OCI-LY7 (cell line): ENCODE measurements at regions of chr17 and their contacts with region 1.

Region 1: GRCh38 chr17:57243171-57243948 is 13.0 kb upstream of the MSI2 start:
- DNase-seq: peak; percentile 85
- H3K4me3 ChIP-seq: no peak overlapping the region
- H3K27ac ChIP-seq: no peak overlapping the region
- H3K4me1 ChIP-seq: peaks cover 19% of the 10 kb centered on the region
- CTCF ChIP-seq: peak; percentile 100

Region 2: DNA sequence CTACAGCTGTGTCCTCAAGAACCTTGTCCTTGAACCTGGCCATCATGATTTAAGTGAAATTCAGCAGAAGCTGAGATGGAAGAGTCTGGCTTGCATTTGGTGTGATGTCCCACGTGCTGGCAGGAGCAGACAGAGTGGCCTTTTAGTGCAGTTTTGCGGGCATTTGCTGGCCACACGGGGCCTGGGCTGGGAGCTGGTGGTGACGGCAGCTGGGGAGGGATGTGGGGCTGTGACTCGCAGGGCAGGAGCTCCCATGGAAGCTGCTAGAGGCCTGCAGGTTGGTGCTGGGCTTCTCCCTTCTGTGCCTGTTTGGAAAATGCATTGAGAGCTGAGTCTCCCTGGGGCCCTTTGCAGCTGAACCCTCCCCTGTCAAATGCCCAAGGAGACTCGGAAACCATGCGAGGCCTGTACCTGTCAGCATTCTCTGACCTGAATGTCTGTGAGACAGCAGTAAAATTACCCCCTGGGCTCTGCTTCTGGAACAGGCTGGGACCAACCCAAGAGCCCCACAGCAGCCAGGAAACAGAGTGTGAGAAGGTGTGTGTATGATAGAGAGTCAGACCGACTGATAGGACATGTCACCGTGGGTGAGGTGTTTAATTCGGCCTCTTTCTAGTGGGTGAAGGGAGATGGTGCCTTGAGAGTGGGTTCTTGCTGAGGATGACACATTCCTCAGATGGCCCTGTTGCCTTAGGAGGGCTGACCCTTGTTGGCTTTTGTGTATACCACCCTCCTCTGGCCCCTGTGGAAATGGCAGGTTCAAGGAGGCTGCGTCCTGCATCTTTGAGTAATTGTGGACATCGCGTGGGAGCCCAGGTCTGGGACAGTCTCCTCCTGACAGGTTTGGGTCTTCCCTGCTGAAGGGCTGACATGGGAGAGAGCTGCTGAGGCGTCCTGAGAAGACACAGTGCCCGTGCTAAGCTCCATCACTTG is 158.5 kb after region 1 on chr17:
- CTCF ChIA-PET with region 1: interaction called, 3 read pairs
- POLR2A ChIA-PET with region 1: no interaction called
- intact Hi-C with region 1: loop called (anchors 1 kb)
- DNase-seq: peak; percentile 51
- H3K4me3 ChIP-seq: no peak overlapping the region
- H3K27ac ChIP-seq: no peak overlapping the region
- H3K4me1 ChIP-seq: peaks cover 53% of the 10 kb centered on the region
- CTCF ChIP-seq: peak; percentile 71

Region 3: DNA sequence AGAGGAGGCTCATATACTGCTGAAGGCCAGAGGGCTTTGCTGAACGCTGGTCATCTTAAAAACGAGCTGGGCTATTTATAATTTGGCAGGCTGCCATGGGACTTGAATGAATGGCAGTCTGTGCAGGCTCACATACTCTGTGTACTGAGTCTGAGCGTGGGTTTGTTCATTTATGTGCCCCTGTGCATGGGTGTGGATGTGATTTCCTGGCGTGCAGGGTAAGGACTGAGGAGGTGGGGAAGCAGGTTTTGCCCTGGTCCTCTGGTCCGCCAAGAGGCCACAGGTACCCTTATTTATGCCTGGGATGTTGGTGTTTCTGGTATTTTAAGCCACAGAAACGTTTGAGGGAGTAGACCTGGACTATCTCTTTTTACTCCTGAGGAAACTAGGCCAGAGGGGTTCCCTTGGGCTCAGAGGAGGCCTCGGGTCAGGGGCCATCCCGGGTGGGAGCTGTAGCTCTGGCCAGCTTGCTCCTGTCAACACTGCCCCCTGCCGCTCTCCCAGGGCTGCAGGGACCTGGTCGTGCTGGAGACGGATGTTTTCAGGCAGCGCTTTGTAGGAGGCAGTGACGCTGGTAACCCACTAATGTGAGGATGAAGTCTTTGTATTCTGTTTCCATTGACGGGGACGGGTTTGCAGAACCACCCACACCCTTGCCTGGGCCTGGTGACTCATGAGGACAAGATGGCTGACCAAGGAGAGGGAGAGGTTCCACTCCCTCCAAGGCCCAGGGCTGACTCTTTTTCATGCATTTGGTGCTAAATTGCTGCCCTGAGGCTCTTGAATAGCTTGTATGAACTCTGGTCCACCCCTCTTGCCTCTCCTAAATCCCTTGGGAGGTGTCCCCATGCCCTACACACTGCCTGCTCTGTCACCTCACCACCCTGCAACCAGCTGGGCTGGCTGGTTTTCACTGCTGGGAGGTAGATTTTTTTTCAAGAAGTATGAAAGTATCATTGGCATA is 197.4 kb after region 1 on chr17:
- CTCF ChIA-PET with region 1: interaction called, 15 read pairs
- POLR2A ChIA-PET with region 1: interaction called, 3 read pairs
- intact Hi-C with region 1: loop called (anchors 1 kb)
- DNase-seq: peak; percentile 66
- H3K4me3 ChIP-seq: no peak overlapping the region
- H3K27ac ChIP-seq: peak overlapping the region; percentile 82
- H3K4me1 ChIP-seq: peaks cover 62% of the 10 kb centered on the region
- CTCF ChIP-seq: peak; percentile 78

Region 4: GRCh38 chr17:57518587-57519581 is 275.5 kb after region 1 on chr17:
- CTCF ChIA-PET with region 1: no interaction called
- POLR2A ChIA-PET with region 1: no interaction called
- intact Hi-C with region 1: loop called (anchors 5 kb)
- DNase-seq: no peak
- H3K4me3 ChIP-seq: no peak overlapping the region
- H3K27ac ChIP-seq: no peak overlapping the region
- H3K4me1 ChIP-seq: peaks cover 40% of the 10 kb centered on the region
- CTCF ChIP-seq: no peak

Region 5: DNA sequence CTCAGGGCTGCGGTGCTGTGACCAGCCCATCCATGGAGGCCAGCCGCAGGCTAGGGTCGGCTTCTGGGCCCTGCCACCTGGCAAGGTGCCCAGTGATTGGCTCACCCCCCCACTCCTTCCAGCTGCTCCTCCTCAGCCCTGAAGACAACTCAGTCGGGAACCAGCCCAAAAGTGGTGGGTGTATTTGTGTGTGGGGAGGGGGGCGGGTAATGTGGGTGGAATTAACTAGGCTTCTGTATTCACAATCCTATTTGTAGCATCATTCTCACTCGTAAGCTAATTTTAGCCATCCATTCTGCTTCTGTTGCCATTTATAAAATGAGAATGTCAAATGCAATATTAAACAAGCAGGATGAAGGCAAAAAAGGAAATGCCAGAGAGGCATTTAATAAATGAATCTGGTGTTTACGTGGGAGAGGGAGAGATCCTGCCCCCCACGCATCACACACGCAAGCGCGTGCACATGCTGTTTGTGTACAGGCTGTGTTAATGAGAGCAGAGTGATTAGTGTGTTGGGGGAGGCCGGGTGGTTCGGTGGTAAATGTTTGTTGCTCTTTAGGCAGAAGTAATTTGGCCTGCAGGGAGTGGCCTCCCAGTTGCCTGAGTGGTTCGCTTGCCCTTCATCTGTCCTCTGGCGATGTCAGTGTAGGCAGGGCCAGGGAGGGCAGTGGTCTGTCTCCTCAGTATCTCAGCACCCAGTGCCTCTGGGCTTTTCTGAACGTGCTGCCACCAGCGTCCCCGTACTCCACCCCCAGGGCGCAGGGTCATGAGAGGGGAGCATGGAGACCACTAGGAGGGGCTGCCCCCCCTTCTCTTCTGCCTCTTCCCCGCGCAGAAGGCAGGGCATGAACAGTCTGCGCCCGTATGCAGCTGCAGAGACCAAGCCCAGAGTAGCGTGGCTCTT is 361.7 kb after region 1 on chr17:
- CTCF ChIA-PET with region 1: no interaction called
- POLR2A ChIA-PET with region 1: interaction called, 3 read pairs
- intact Hi-C with region 1: loop called (anchors 5 kb)
- DNase-seq: peak; percentile 92
- H3K4me3 ChIP-seq: peak overlapping the region; percentile 4
- H3K27ac ChIP-seq: peak overlapping the region; percentile 89
- H3K4me1 ChIP-seq: peaks cover 73% of the 10 kb centered on the region
- CTCF ChIP-seq: peak; percentile 67

Region 6: DNA sequence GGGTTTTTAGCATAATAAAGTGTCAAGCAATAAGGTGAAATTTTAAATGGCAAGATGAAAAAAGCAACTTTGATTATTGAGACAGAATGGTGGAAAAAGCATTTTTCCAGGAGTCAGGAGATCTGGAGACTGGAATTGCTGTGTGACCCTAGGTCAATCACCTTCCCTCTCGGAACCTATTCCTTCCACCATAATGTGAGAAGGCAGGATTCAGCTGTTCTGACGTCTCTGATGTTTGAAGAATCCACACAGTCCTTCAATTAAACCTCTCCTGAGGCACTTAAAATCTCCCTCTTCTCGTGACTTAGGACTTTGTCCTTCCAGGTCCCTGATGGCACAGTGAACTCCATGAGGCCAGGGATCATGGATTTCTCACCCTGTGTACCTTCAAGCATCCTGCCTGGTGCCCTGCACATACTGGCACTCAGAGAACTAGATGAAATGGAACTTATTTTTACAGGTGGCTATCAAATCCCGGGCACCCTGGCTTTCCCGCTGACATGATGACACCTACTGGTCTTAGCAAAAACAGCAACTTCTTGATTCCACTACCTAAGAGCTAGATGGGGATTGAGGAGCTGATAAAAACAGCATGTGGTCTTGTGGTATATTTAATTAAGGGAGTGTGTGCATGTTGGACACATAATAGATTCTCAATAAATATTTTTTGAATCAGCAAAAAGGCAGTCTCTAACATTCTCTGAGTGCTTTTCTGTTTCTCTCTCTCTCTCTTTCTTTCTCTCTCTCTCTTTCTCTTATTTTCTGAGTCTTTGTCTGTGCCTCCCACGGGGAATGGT is 504.1 kb after region 1 on chr17:
- CTCF ChIA-PET with region 1: interaction called, 5 read pairs
- POLR2A ChIA-PET with region 1: no interaction called
- intact Hi-C with region 1: loop called (anchors 2 kb)
- DNase-seq: peak; percentile 83
- H3K4me3 ChIP-seq: no peak overlapping the region
- H3K27ac ChIP-seq: no peak overlapping the region
- H3K4me1 ChIP-seq: peaks cover 24% of the 10 kb centered on the region
- CTCF ChIP-seq: peak; percentile 97